Psoas muscle (tissue), 8 donors: ENCODE measurements at regions of chr1 and their contacts with region 1.

Region 1: DNA sequence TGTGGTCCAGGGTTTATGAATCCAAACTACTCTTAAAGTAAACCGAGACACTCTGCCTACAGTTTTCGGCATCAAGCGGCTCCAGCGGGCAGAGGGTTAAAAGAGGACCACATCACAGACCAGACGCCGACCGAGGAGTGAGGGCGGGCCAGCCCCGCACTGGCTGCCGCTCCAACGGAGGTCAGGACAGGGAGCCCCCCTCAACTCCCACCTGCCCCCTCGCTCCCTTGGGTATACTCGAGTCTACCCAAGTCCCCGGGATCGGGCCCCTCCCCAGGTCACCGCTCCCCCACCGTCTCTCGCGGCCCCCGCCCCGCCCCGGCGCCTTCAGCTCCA is 312 bp downstream of the ARNT start:
- DNase-seq: no peak
- ATAC-seq: peak; percentile 61 to 73 (median 68)
- H3K4me3 ChIP-seq: peak overlapping the region; percentile 86
- H3K27ac ChIP-seq: peak overlapping the region; percentile 94
- H3K4me1 ChIP-seq: peaks cover 12% of the 10 kb centered on the region
- H3K27me3 ChIP-seq: no peaks in the 10 kb centered on the region
- CTCF ChIP-seq: no peak

Region 2: DNA sequence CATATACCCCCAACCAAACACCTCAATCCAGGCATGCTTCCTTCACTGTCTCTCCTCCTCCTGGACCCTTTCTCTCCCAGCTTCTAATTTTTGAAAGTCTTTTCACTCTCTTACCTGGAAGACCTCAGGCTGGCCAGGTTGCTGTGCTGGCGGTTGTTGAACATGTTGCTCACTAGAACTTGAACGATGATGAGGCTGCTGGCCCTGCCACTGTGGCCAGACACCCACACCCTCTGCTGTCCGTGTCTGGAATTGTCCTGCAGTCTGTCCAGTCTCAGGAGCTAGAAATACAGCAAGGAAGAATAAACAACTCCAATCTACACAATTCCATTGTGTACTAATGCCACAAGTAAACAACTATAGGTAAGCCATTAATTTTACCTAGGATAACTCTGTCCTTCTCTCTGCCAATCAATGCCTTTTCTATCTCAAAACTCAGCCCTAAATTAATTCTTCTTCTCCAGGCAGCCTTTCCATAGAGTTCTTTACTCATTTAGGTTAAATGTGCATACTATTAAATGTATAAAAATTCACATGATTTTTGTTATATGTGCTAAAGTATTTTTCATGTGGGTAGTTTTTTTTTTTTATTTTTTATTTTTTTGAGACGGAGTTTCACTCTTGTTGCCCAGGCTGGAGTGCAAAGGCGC is 62.9 kb before region 1 on chr1:
- intact Hi-C with region 1: no loop called
- DNase-seq: peak; percentile 28 to 62
- ATAC-seq: peak in 3 of 4 donors; percentile 64 to 79 (median 72)
- H3K4me3 ChIP-seq: no peak overlapping the region
- H3K27ac ChIP-seq: no peak overlapping the region
- H3K4me1 ChIP-seq: no peaks in the 10 kb centered on the region
- H3K27me3 ChIP-seq: no peaks in the 10 kb centered on the region
- CTCF ChIP-seq: peak; percentile 47

Region 3: GRCh38 chr1:150895601-150896000 is 19.5 kb after region 1 on chr1:
- intact Hi-C with region 1: loop called in 1 of 2 experiments (anchors 1 kb)
- DNase-seq: peak; percentile 34 to 82
- ATAC-seq: peak; percentile 100
- H3K4me3 ChIP-seq: peak overlapping the region; percentile 40
- H3K27ac ChIP-seq: peak overlapping the region; percentile 91
- H3K4me1 ChIP-seq: peaks cover 14% of the 10 kb centered on the region
- H3K27me3 ChIP-seq: no peaks in the 10 kb centered on the region
- CTCF ChIP-seq: peak; percentile 13

Region 4: DNA sequence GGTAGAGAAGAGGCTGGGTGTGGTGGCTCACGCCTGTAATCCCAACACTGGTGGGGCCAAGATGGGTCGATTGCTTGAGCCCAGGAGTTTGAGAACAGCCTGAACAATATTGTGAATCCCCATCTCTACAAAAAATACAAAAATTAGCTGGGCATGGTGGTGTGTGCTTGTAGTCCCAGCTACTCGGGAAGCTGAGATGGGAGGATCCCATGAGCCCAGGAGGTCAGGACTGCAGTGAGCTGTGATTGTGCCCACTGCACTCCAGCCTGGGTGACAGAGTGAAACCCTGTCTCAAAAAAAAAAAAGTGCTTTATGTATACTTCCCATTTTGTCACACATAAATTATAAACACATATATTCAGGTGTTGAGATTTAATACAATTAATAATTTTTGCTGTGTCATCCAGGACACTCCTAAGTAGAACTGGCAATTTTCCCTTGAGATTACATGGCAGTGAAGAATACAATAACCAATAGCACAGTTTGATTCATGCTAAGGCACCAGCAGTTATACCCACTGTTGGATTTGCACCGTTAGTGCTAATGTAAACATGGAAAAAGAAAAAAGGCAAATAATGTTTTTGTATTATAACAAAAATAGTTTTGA is 210.0 kb after region 1 on chr1:
- intact Hi-C with region 1: no loop called
- DNase-seq: peak in 1 of 2 donors; percentile 15
- ATAC-seq: no peak
- H3K4me3 ChIP-seq: no peak overlapping the region
- H3K27ac ChIP-seq: no peak overlapping the region
- H3K4me1 ChIP-seq: no peaks in the 10 kb centered on the region
- H3K27me3 ChIP-seq: no peaks in the 10 kb centered on the region
- CTCF ChIP-seq: no peak